ENCODE measurements at regions of chr13 and their contacts with region 1.

Region 1: DNA sequence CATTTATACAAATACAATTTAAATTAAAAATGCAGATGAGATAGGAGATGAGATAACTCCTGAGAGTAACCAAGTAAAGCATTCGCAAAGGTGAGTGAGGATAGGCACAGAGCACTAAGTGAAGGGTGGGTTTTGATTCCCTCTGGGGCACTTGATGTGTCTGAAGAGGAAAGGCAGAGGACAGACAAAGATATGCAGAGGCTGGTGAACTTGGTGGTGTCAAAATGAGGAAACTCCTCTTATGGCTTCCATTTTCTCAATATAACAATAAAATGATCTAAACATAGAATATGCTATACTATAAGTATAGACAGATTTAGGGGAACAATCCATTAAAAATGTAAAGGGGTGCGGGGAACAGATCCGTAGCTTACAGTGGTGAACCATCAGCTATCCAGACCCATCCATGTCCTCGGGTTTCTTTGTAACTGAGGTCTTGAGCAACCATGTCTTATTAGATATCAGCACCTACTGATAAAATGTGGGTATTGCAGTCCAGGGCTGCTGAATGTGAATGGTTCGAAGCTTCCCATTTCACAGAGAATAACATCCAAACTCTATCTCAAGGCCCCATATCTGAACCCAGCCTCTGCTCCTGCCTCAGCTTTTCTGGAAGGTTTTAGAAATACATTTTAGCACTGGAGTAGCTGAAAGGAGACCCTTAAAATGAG is 73.9 kb upstream of the SLC10A2 start:
- DNase-seq: no peak
- ATAC-seq: no peak
- H3K4me3 ChIP-seq: no peak overlapping the region
- H3K27ac ChIP-seq: no peak overlapping the region
- H3K4me1 ChIP-seq: no peaks in the 10 kb centered on the region
- H3K27me3 ChIP-seq: no peaks in the 10 kb centered on the region
- CTCF ChIP-seq: peak in 2 of 5 experiments; percentile 11 to 32
- POLR2A ChIP-seq: no peak

Region 2: GRCh38 chr13:102903659-102904407 is 236.3 kb before region 1 on chr13:
- in situ Hi-C with region 1: loop called in 1 of 4 experiments (anchors 25 kb)
- intact Hi-C with region 1: no loop called
- DNase-seq: no peak
- ATAC-seq: peak in 1 of 2 donors; percentile 28
- H3K4me3 ChIP-seq: peak overlapping the region in 3 of 4 donors; percentile 13 to 33 (median 24)
- H3K27ac ChIP-seq: peak overlapping the region in 2 of 4 donors; percentile 39 to 60
- H3K4me1 ChIP-seq: peaks cover 0 to 6% of the 10 kb centered on the region in 2 donors
- H3K27me3 ChIP-seq: no peaks in the 10 kb centered on the region
- CTCF ChIP-seq: peak in 4 of 5 experiments; percentile 26 to 45 (median 36)
- POLR2A ChIP-seq: no peak